KBM-7 (cell line): ENCODE measurements at regions of chr1 and their contacts with region 1.

Region 1: DNA sequence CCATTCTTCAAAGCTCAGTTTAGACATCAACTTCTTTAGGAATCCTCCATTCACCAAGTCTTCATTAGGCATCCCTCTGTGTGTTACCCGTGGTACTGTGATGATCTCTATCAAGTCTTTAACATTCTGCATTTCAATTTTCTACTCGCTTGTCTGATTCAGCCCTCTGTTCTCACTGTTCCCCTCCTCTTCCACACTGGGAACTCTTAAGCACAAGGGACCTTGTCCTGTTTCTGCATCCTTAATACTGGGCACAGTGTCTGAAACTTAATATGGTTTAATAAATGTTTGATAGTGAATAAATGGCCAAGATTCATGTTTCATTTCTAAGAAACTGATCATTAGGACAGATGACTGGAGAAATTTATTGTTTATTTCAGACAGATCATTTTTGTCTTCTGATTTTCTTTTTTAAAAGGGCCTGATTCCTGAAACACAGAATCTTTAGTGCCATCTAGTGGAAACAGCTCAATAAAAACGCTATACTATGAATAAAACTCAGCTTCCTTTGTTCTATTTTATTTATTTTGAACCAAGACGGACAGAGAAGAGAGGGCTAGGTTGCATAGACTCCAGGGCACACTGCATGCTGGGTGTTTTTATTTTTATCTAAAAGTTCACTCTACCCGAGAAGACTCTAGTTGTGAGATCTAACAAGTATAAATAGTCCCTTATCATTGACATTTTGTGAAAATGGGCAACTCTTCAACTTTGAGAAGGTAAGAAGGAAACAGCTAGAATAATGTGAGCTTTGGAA is 7.0 kb upstream of the TRIM45 start:
- DNase-seq: peak; percentile 62

Region 2: DNA sequence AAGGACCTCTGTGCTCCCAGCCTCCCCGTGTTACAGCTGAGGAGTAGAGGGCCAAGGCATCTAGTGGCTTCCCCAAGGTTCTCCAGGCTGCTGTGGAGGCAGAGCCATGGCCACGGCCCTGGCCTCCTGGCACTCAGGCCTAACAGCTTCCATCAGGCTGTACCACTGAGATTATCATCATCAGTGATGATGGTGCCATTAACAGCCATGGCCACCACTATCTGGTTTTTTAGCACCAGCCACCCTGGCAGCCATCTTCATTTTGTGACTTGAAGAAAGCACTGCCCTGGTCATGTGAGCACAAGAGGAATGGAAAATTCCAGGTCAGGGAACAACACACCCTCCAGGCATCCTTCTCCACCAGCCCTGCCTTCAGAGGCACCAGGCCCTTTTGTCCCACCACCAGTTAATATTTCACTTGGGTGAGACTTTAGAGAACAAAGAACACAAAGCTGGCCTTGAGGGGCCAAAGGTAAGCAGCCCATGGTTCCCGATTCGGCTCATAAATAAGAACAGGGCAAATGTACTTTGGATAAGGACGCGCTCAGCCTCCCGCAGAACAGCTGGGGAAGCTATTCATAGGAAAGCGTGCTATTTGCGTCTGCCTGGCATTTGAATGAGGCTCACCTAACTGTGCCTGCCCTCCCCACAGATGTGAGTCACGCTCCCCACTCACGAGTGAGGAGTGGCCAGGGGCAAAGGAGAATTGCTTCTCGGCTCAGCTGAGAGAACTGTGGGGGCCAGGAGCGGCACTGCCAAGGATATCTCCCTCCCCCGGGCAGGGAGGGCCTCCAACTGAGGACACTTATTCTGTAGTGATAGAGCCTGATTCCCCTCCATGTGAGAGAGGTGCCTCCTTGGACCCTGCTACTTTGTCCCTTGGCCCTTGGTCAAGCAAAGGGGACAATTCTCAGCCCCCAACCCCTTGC is 653.3 kb before region 1 on chr1:
- in situ Hi-C with region 1: no loop called
- DNase-seq: no peak

Region 3: GRCh38 chr1:116537467-116537866 is 591.0 kb before region 1 on chr1:
- in situ Hi-C with region 1: no loop called
- DNase-seq: no peak

Region 4: DNA sequence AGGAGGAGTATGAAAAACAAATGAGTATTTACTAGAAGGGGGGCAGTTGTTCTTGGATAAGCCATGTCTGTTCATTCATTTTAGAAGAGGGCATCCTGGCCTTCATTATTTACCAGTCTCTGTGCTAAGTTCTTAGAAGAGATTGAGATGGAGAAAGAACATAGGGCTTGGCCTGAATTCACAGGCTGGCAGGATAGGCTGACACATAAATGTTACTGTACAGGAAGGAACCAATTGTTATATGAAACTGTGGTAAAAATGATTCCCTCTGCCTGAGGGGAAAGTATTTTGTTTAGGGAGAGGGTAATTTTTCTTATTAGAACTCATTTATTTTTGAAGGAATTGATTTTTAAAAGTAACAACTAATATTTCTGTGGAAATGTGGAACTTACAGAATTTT is 338.3 kb after region 1 on chr1:
- in situ Hi-C with region 1: loop called (anchors 25 kb)
- DNase-seq: no peak

Region 5: DNA sequence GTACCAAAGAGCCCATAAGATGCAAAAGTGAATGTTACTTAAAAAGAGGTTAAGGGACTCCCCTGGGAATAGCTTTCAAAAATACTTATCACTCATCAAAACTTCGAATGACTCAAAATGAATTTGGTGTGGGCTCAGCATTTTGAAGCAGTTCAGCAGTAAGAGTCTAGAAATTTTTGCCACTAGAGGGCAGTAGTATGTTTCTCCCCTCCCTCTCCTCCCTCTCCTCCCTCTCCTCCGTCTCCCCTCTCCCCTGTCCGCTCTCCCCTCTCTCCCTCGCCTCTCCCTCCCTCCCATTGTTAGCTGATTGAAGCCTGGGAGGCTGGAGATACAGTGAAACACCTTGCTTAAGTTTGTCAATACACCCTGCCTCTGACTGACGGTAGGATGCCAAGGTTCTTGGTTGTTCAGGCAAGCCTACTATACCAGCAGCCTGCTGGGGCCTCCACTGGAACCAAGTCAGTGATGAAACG is 406.5 kb after region 1 on chr1:
- in situ Hi-C with region 1: no loop called
- DNase-seq: peak; percentile 91

Region 6: GRCh38 chr1:117821782-117822447 is 693.4 kb after region 1 on chr1:
- in situ Hi-C with region 1: loop called (anchors 25 kb)
- DNase-seq: peak; percentile 4